ENCODE measurements at regions of chr3 and their contacts with region 1.

Region 1: DNA sequence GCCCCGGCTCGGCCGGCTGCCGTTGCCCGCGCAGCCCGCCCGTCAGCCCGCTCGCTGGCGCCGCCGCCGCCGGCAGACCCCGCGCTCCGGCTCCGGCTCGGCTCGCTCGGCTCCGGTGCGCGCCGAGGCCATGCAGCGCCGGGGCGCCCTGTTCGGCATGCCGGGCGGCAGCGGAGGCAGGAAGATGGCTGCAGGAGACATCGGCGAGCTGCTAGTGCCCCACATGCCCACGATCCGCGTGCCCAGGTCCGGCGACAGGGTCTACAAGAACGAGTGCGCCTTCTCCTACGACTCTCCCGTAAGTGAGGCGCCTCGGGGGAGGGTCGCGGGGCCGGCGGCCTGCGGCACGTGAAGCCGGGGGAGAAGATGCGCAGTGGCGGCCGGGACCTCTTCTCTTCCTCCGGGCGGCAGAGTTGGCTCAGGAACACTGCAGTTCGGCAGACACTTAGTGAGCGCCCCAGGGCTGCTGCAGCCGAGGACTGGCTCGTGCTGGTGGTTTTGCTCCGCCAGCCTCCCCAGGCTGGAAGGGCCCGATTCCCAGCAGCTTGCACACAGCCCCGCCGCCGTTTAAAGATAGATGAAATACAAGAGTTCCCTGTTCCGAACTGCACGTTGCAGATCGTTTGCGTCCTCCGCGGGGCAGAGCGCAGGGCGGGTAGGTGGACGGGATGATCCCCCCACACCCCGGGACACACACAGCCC is 407 bp downstream of the USP13 start:
- DNase-seq: peak; percentile 82
- ATAC-seq: peak; percentile 82

Region 2: GRCh38 chr3:179716811-179717210 is 63.6 kb after region 1 on chr3:
- intact Hi-C with region 1: loop called (anchors 10 kb)
- DNase-seq: no peak
- ATAC-seq: no peak

Region 3: DNA sequence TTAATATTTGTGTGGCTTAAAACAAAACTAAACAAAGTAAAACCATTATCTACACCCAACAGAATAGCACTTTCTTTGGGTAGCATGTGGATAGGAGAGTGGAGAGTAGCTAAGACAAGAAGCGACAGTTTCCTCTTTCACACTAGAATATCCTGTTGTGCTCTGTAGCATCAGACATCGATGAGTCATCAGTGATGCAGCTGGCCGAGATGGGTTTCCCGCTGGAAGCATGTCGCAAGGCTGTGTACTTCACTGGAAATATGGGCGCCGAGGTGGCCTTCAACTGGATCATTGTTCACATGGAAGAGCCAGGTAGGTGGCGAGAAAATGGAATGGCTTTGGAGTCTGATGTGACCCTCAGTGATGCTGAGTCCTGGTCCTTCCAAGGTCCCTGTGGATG is 107.7 kb after region 1 on chr3:
- intact Hi-C with region 1: no loop called
- DNase-seq: no peak
- ATAC-seq: no peak